ENCODE measurements at regions of chr2 and their contacts with region 1.

Region 1: GRCh38 chr2:85707304-85707703 is 13.1 kb downstream of the GNLY start:
- DNase-seq: peak; percentile 87
- H3K4me3 ChIP-seq: no peak overlapping the region
- H3K27ac ChIP-seq: no peak overlapping the region
- H3K27me3 ChIP-seq: no peaks in the 10 kb centered on the region
- CTCF ChIP-seq: peak; percentile 89

Region 2: DNA sequence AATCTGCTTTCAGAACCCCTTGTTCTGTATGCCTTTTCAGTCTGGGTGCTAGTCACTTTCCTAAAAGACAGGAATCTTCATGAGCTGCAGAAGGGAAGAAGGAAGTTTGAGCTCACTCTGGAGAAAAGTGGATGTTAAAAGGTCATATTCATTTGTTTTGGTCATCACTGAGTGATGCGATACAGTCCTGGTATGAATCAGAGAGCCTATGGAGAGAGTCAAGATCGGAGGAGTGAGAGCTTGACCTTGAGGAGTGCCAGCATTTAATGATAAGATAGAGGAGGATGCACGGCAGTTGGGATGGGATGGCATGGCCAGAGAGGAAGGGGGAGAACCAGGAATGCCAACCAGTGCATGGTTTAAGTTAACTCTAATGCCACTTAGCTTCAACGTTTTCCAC is 71.7 kb before region 1 on chr2:
- CTCF ChIA-PET with region 1: interaction called, 165 read pairs
- POLR2A ChIA-PET with region 1: interaction called, 3 read pairs
- DNase-seq: no peak
- H3K4me3 ChIP-seq: no peak overlapping the region
- H3K27ac ChIP-seq: peak overlapping the region; percentile 21
- H3K27me3 ChIP-seq: no peaks in the 10 kb centered on the region
- CTCF ChIP-seq: no peak

Region 3: GRCh38 chr2:85678794-85679672 is 28.3 kb before region 1 on chr2:
- CTCF ChIA-PET with region 1: interaction called, 88 read pairs
- POLR2A ChIA-PET with region 1: no interaction called
- DNase-seq: no peak
- H3K4me3 ChIP-seq: no peak overlapping the region
- H3K27ac ChIP-seq: no peak overlapping the region
- H3K27me3 ChIP-seq: peaks cover 8% of the 10 kb centered on the region
- CTCF ChIP-seq: peak; percentile 95

Region 4: GRCh38 chr2:85723707-85724360 is 16.5 kb after region 1 on chr2:
- CTCF ChIA-PET with region 1: interaction called, 56 read pairs
- POLR2A ChIA-PET with region 1: no interaction called
- DNase-seq: no peak
- H3K4me3 ChIP-seq: no peak overlapping the region
- H3K27ac ChIP-seq: no peak overlapping the region
- H3K27me3 ChIP-seq: peaks cover 21% of the 10 kb centered on the region
- CTCF ChIP-seq: no peak